GM12878 (cell line): ENCODE measurements at regions of chr4 and their contacts with region 1.

Region 1: GRCh38 chr4:36351082-36351666 is 69.8 kb downstream of the DTHD1 start:
- DNase-seq: peak; percentile 37
- ATAC-seq: peak; percentile 72
- H3K4me3 ChIP-seq: no peak overlapping the region
- H3K27ac ChIP-seq: no peak overlapping the region
- H3K4me1 ChIP-seq: peaks cover 13% of the 10 kb centered on the region
- H3K27me3 ChIP-seq: no peaks in the 10 kb centered on the region
- CTCF ChIP-seq: peak; percentile 70 to 87 (median 78)
- EP300 ChIP-seq: no peak
- POLR2A ChIP-seq: no peak
- RAD21 ChIP-seq: peak; percentile 96

Region 2: GRCh38 chr4:36255577-36255976 is 95.6 kb before region 1 on chr4:
- CTCF ChIA-PET with region 1: interaction called, 7 read pairs
- POLR2A ChIA-PET with region 1: interaction called, 3 read pairs
- RAD21 ChIA-PET with region 1: interaction called, 32 read pairs
- SMC1A ChIA-PET with region 1: interaction called, 42 read pairs
- in situ Hi-C with region 1: no loop called
- intact Hi-C with region 1: loop called (anchors 1 kb)
- DNase-seq: peak; percentile 92
- ATAC-seq: peak; percentile 87
- H3K4me3 ChIP-seq: no peak overlapping the region
- H3K27ac ChIP-seq: peak overlapping the region; percentile 85
- H3K4me1 ChIP-seq: peaks cover 11% of the 10 kb centered on the region
- H3K27me3 ChIP-seq: no peaks in the 10 kb centered on the region
- CTCF ChIP-seq: no peak
- EP300 ChIP-seq: no peak; a peak in 1 of 4 replicates
- POLR2A ChIP-seq: no peak
- RAD21 ChIP-seq: 0 out of 2 replicates have a peak, but pooled peaks have one; percentile 16

Region 3: GRCh38 chr4:36325499-36325898 is 25.7 kb before region 1 on chr4:
- CTCF ChIA-PET with region 1: interaction called, 16 read pairs
- POLR2A ChIA-PET with region 1: interaction called, 8 read pairs
- RAD21 ChIA-PET with region 1: interaction called, 21 read pairs
- SMC1A ChIA-PET with region 1: interaction called, 32 read pairs
- in situ Hi-C with region 1: no loop called
- intact Hi-C with region 1: no loop called
- DNase-seq: peak; percentile 59
- ATAC-seq: peak; percentile 92
- H3K4me3 ChIP-seq: no peak overlapping the region
- H3K27ac ChIP-seq: peak overlapping the region; percentile 93
- H3K4me1 ChIP-seq: peaks cover 57% of the 10 kb centered on the region
- H3K27me3 ChIP-seq: no peaks in the 10 kb centered on the region
- CTCF ChIP-seq: no peak
- EP300 ChIP-seq: 0 out of 4 replicates have a peak, but pooled peaks of 1 of the 2 experiments have one; percentile 16
- POLR2A ChIP-seq: no peak
- RAD21 ChIP-seq: no peak

Region 4: GRCh38 chr4:36385951-36386571 is 34.9 kb after region 1 on chr4:
- CTCF ChIA-PET with region 1: interaction called, 23 read pairs
- POLR2A ChIA-PET with region 1: no interaction called
- RAD21 ChIA-PET with region 1: interaction called, 6 read pairs
- SMC1A ChIA-PET with region 1: interaction called, 10 read pairs
- in situ Hi-C with region 1: no loop called
- intact Hi-C with region 1: no loop called
- DNase-seq: peak; percentile 63
- ATAC-seq: peak; percentile 94
- H3K4me3 ChIP-seq: 0 out of 2 replicates have a peak overlapping the region, but pooled peaks have one; percentile 7
- H3K27ac ChIP-seq: 0 out of 2 replicates have a peak overlapping the region, but pooled peaks have one; percentile 41
- H3K4me1 ChIP-seq: peaks cover 9% of the 10 kb centered on the region; the same call in 1 of the 2 replicates
- H3K27me3 ChIP-seq: no peaks in the 10 kb centered on the region
- CTCF ChIP-seq: no peak
- EP300 ChIP-seq: no peak; a peak in 1 of 4 replicates
- POLR2A ChIP-seq: no peak
- RAD21 ChIP-seq: no peak

Region 5: DNA sequence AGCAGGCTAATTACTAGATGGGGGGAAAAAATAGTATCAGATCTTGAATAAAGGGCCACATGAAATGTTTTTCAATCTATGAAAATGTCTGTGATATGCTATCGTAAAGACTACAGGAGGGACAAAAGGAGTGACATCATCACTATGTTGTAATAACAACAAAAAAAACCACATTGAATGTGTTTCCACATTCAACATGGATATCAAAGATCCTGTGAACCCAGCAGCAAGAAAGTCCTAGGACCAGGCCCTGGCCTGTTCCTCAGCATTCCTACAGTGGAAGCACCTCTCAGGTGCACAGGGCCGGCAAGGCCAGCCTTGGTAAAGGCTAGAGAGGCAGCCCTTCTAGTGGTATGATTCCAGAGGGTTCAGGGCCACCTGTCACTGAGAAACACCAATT is 1216.7 kb after region 1 on chr4:
- CTCF ChIA-PET with region 1: no interaction called
- POLR2A ChIA-PET with region 1: no interaction called
- RAD21 ChIA-PET with region 1: no interaction called
- SMC1A ChIA-PET with region 1: no interaction called
- in situ Hi-C with region 1: no loop called
- intact Hi-C with region 1: loop called (anchors 5 kb)
- DNase-seq: no peak
- ATAC-seq: no peak
- H3K4me3 ChIP-seq: no peak overlapping the region
- H3K27ac ChIP-seq: no peak overlapping the region
- H3K4me1 ChIP-seq: no peaks in the 10 kb centered on the region
- H3K27me3 ChIP-seq: no peaks in the 10 kb centered on the region
- CTCF ChIP-seq: no peak
- EP300 ChIP-seq: no peak
- POLR2A ChIP-seq: no peak
- RAD21 ChIP-seq: no peak